Brain microvascular endothelial cell (primary cell): ENCODE measurements at regions of chr14 and their contacts with region 1.

Region 1: GRCh38 chr14:68884031-68885030 is 91.5 kb upstream of the ZFP36L1 start:
- DNase-seq: peak; percentile 76
- H3K4me3 ChIP-seq: no peak overlapping the region
- H3K27ac ChIP-seq: peak overlapping the region; percentile 29
- H3K27me3 ChIP-seq: no peaks in the 10 kb centered on the region
- CTCF ChIP-seq: no peak

Region 2: DNA sequence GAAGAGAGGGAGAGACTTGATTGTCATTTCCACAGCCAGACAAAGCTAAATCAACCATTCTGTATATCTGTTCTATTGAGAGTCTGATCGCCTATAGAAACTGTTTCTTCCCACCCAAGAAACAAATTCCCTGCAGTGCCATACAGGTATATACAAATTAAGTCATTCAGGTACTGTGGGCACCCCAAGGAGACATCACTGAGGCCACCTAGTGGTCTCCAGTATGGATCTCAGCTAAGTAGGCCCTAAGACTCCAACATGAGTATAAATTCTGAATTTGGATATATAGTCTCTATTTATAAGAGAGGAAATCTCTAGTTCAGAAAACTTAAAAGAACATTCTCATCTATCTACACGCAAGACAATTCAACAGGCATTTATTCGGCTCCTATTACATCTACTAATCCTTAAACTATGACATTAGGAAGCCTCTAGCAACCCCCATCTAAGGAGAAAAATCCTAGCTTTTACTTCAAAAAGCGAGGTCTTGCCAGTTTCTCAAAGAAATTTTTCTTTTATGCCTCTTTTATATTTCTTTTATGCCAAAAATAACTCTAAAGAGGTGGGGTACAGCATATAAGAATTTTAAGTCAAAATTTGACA is 206.0 kb after region 1 on chr14:
- in situ Hi-C with region 1: loop called (anchors 25 kb)
- DNase-seq: peak; percentile 33
- H3K4me3 ChIP-seq: no peak overlapping the region
- H3K27ac ChIP-seq: no peak overlapping the region
- H3K27me3 ChIP-seq: no peaks in the 10 kb centered on the region
- CTCF ChIP-seq: peak; percentile 85